Pancreas (tissue), 10 donors: ENCODE measurements at regions of chr11 and their contacts with region 1.

Region 1: GRCh38 chr11:120344302-120345004 is 8.2 kb downstream of the ARHGEF12 start:
- DNase-seq: no peak
- ATAC-seq: peak in 2 of 4 donors; percentile 33 to 43
- H3K4me3 ChIP-seq: no peak overlapping the region
- H3K27ac ChIP-seq: no peak overlapping the region
- H3K4me1 ChIP-seq: peaks cover 23 to 58% (median 35%) of the 10 kb centered on the region in 3 donors
- H3K27me3 ChIP-seq: no peaks in the 10 kb centered on the region
- CTCF ChIP-seq: no peak

Region 2: DNA sequence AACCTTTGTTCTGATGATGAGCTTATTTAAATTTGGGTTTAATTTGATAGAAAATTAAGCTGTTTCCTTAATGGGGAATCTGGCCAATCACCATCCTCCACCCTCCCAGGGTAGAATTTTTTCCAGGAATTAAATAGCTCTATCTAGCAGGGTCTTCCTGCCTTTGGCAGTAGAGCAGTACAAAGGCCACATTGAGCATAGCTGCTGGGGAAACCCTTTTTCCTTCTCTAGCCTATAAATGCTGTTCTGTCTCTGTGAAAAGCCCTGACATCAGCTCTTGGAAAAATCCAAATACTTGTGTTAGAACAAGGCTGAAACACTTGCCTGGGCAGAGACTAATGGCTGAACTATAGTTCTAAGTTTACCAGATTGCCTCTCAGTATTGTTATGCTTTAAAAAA is 46.8 kb after region 1 on chr11:
- intact Hi-C with region 1: loop called in 1 of 3 experiments (anchors 10 kb)
- DNase-seq: no peak
- ATAC-seq: peak in 3 of 4 donors; percentile 69 to 87 (median 76)
- H3K4me3 ChIP-seq: no peak overlapping the region
- H3K27ac ChIP-seq: peak overlapping the region in 2 of 4 donors; percentile 33 to 35
- H3K4me1 ChIP-seq: peaks cover 0 to 32% (median 18%) of the 10 kb centered on the region in 3 donors
- H3K27me3 ChIP-seq: no peaks in the 10 kb centered on the region
- CTCF ChIP-seq: no peak

Region 3: GRCh38 chr11:120413480-120413879 is 69.0 kb after region 1 on chr11:
- intact Hi-C with region 1: loop called in 1 of 3 experiments (anchors 10 kb)
- DNase-seq: no peak
- ATAC-seq: no peak
- H3K4me3 ChIP-seq: no peak overlapping the region
- H3K27ac ChIP-seq: no peak overlapping the region
- H3K4me1 ChIP-seq: no peaks in the 10 kb centered on the region
- H3K27me3 ChIP-seq: no peaks in the 10 kb centered on the region
- CTCF ChIP-seq: no peak